Breast epithelium (tissue), 4 donors: ENCODE measurements at regions of chr1 and their contacts with region 1.

Region 1: GRCh38 chr1:38179483-38179882 is 132.9 kb upstream of the POU3F1 start:
- DNase-seq: no peak
- H3K4me3 ChIP-seq: no peak overlapping the region
- H3K27ac ChIP-seq: no peak overlapping the region
- H3K4me1 ChIP-seq: no peaks in the 10 kb centered on the region
- H3K27me3 ChIP-seq: no peaks in the 10 kb centered on the region
- CTCF ChIP-seq: no peak
- POLR2A ChIP-seq: no peak

Region 2: DNA sequence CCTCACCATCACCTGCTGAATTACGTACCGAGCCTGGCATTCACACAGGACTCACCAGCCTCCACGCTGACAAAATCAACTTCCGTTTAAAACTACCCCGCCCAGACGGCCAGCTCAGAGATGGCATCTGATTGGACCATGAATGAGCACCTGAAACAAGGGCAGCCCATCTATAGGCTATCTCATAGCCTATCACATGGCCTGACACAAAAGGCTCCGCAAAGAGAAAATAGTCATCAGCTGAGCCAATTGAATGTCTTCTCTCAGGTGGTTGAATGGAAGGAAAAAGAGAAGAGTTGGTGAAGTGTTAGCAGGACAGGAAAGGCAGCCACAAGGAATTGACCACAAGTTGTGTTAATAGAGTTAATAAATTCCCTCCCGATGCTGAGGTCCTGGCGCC is 755.7 kb before region 1 on chr1:
- intact Hi-C with region 1: no loop called
- DNase-seq: no peak
- H3K4me3 ChIP-seq: no peak overlapping the region
- H3K27ac ChIP-seq: no peak overlapping the region
- H3K4me1 ChIP-seq: no peaks in the 10 kb centered on the region
- H3K27me3 ChIP-seq: no peaks in the 10 kb centered on the region
- CTCF ChIP-seq: no peak
- POLR2A ChIP-seq: no peak

Region 3: DNA sequence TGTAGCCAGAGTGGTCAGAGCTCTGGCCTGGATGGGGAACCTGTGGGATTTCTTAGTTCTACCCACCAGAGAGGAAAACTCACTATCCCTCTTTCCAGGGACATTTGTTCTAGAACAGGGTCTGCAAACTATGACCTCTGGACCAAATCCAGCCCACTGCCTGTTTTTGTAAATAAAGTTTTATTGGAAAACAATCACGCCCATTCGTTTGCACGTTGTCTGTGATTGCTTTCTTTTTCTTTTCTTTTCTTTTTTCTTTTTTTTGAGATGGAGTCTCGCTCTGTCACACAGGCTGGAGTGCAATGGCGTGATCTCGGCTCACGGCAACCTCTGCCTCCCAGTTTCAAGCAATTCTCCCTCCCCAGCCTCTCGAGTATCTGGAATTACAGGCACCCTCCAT is 16.6 kb before region 1 on chr1:
- intact Hi-C with region 1: no loop called
- DNase-seq: no peak
- H3K4me3 ChIP-seq: no peak overlapping the region
- H3K27ac ChIP-seq: no peak overlapping the region
- H3K4me1 ChIP-seq: no peaks in the 10 kb centered on the region
- H3K27me3 ChIP-seq: peaks cover 0 to under 1% of the 10 kb centered on the region in 2 donors
- CTCF ChIP-seq: no peak
- POLR2A ChIP-seq: no peak

Region 4: GRCh38 chr1:38191461-38191860 is 12.0 kb after region 1 on chr1:
- intact Hi-C with region 1: loop called (anchors 1 kb)
- DNase-seq: no peak
- H3K4me3 ChIP-seq: no peak overlapping the region
- H3K27ac ChIP-seq: no peak overlapping the region
- H3K4me1 ChIP-seq: no peaks in the 10 kb centered on the region
- H3K27me3 ChIP-seq: peaks cover 0 to under 1% of the 10 kb centered on the region in 2 donors
- CTCF ChIP-seq: no peak
- POLR2A ChIP-seq: no peak